ENCODE measurements at regions of chr9 and their contacts with region 1.

Region 1: GRCh38 chr9:128339771-128340690 is at the start of gene SLC27A4:
- DNase-seq: peak; percentile 81
- H3K4me3 Mint-ChIP-seq: peak within 1 kb of the TSS; percentile 89
- H3K27ac Mint-ChIP-seq: peak within 1 kb of the TSS; percentile 89
- H3K4me1 Mint-ChIP-seq: peaks cover 7% of the 10 kb centered on the region
- H3K27me3 Mint-ChIP-seq: no peaks in the 10 kb centered on the region
- total RNA-seq, gene SLC27A4: 30.5 and 32.0 TPM in 2 replicates

Region 2: GRCh38 chr9:128191406-128192046 is 148.5 kb before region 1 on chr9 and contains the start of gene CIZ1:
- intact Hi-C with region 1: loop called (anchors 5 kb)
- DNase-seq: peak; percentile 69
- H3K4me3 Mint-ChIP-seq: peak within 1 kb of the TSS; percentile 94
- H3K27ac Mint-ChIP-seq: peak within 1 kb of the TSS; percentile 83
- H3K4me1 Mint-ChIP-seq: peaks cover 33% of the 10 kb centered on the region
- H3K27me3 Mint-ChIP-seq: no peaks in the 10 kb centered on the region
- total RNA-seq, gene CIZ1: 150 TPM in 2 replicates

Region 3: GRCh38 chr9:128275996-128276573 is 63.9 kb before region 1 on chr9 and contains the starts of genes GOLGA2 and SWI5:
- intact Hi-C with region 1: loop called (anchors 1 kb)
- DNase-seq: peak; percentile 100
- H3K4me3 Mint-ChIP-seq: peak within 1 kb of the TSS; percentile 97
- H3K27ac Mint-ChIP-seq: peak within 1 kb of the TSS; percentile 89
- H3K4me1 Mint-ChIP-seq: peaks cover 40% of the 10 kb centered on the region
- H3K27me3 Mint-ChIP-seq: no peaks in the 10 kb centered on the region
- total RNA-seq, gene GOLGA2: 44.0 and 47.9 TPM in 2 replicates
- total RNA-seq, gene SWI5: 13.5 and 13.7 TPM in 2 replicates

Region 4: DNA sequence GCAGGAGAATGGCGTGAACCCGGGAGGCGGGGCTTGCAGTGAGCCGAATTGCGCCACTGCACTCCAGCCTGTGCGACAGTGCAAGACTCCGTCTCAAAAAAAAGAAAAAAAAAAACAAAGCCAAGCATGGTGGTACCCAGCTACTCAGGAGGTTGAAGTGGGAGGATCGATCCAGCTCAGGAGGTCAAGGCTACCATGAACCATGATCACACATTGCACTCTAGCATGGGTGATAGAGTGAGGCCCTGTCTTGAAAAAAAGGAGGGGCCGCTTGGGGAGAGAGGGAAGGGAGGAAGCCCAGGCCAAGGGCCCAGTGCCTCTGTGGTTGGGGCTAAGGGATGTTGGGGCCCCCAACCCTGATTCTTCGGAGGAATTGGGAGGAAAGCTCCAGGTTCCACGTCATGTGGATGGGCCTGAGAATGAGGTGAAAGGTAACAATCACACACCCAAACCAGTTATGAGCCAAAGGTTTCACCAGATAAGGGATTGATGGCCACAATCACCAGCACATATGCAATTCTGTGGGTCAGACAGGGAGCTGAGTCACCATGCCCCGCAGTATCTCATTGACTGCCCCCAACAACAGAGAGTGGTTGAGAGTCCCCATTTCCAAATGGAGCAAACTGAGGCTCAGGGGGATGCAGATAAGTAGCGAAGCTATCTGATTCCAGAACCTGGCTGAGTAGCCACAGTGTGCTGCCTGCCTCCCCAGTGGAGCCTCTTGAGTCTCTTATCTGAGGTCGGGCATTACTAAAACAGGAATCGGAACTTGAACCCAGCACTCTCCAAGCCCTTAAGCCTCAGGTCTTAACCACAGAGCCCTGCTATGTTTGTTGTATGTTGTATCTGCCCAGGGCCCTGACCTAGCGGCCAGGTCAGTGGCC is 43.5 kb before region 1 on chr9:
- intact Hi-C with region 1: loop called (anchors 1 kb)
- DNase-seq: no peak
- H3K4me3 Mint-ChIP-seq: no peak overlapping the region
- H3K27ac Mint-ChIP-seq: no peak overlapping the region
- H3K4me1 Mint-ChIP-seq: no peaks in the 10 kb centered on the region
- H3K27me3 Mint-ChIP-seq: no peaks in the 10 kb centered on the region

Region 5: DNA sequence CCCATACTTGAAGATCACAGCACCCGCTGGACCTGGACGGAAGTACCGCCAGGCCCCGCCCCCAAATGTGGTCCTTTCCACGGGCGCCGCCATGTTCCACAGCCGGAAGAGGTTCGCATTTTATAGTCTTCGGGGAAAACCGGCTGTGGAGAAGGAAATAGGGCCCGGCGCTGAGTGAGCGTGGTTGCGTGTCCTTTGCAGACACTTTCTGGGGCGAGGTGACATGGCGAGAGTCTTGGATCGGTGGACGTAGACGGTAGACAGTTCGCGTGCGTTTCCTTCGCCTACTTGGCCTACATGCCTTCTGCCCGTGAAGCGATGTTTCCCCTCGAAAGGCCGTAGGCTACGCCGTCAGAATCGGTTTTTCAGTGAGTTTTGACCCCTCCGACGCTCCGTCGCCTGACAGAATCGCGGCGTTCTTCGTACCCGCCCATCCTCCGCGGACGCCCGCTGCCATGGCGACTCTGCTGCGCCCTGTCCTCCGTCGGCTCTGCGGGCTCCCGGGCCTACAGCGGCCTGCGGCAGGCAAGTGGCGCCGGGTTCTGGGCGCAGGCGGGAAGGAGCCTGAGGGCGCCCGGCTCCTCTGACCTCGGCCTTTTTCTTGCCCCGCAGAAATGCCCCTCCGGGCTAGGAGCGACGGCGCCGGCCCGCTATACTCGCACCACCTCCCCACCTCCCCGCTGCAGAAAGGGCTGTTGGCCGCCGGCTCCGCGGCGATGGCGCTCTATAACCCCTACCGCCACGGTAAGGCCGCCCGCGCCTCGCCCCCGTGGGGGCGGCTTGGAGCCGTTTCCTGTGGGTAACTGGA is 17.4 kb before region 1 on chr9 and contains the starts of genes COQ4 and TRUB2:
- intact Hi-C with region 1: loop called (anchors 1 kb)
- DNase-seq: peak; percentile 90
- H3K4me3 Mint-ChIP-seq: peak within 1 kb of the TSS; percentile 99
- H3K27ac Mint-ChIP-seq: peak within 1 kb of the TSS; percentile 99
- H3K4me1 Mint-ChIP-seq: peaks cover 11% of the 10 kb centered on the region
- H3K27me3 Mint-ChIP-seq: no peaks in the 10 kb centered on the region
- total RNA-seq, gene COQ4: 49.6 and 52.2 TPM in 2 replicates
- total RNA-seq, gene TRUB2: 33.5 and 36.1 TPM in 2 replicates

Region 6: GRCh38 chr9:128635283-128636023 is 295.4 kb after region 1 on chr9:
- intact Hi-C with region 1: no loop called
- DNase-seq: no peak
- H3K4me3 Mint-ChIP-seq: no peak overlapping the region
- H3K27ac Mint-ChIP-seq: no peak overlapping the region
- H3K4me1 Mint-ChIP-seq: no peaks in the 10 kb centered on the region
- H3K27me3 Mint-ChIP-seq: no peaks in the 10 kb centered on the region